ENCODE measurements at regions of chr2 and their contacts with region 1.

Region 1: GRCh38 chr2:43995733-43996533 is at the start of gene LRPPRC:
- DNase-seq: peak; percentile 87 to 89
- H3K4me3 ChIP-seq: peak within 1 kb of the TSS; percentile 84 to 100 (median 100)
- H3K27ac ChIP-seq: peak within 1 kb of the TSS; percentile 98
- H3K4me1 ChIP-seq: peaks cover 3 to 7% (median 5%) of the 10 kb centered on the region in 4 experiments; a peak in 5 of 7 replicates
- H3K27me3 ChIP-seq: no peaks in the 10 kb centered on the region
- CTCF ChIP-seq: no peak
- EP300 ChIP-seq: peak in 1 of 2 experiments; percentile 98; a peak in 2 of 3 replicates
- POLR2A ChIP-seq: peak; percentile 83 to 96
- RAD21 ChIP-seq: no peak
- total RNA-seq, gene LRPPRC: 156 and 167 TPM in 2 replicates

Region 2: DNA sequence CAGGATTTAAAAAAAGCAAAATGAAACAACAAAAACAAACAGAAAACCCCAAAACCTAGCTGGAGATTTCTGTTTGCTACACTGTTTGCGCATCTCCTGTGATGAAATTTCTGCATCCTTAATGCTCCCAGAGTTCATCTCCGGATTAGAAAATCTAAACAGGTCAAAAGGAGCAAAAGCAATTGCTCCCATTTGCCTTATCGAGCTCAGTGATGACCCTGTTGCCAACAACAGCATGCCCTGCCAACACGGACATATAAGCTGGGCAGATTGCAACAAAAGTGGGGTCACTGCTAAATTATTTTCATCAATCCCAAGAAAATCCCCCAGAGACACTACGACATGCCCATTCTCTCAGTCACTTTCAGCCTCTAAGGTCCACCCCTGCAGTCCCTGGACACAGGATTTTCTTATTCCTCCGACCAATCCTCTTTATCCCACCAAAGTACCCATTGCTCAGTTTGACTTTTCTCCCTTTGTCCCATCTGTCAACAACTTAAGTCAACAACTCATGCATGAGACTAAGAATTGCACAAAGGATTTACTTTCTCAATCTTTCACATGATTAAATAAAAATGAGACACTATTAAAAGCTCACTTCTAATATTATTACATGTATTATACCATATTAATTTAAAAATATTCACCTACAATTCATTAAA is 89.4 kb before region 1 on chr2:
- CTCF ChIA-PET with region 1: no interaction called
- POLR2A ChIA-PET with region 1: no interaction called
- DNase-seq: no peak
- H3K4me3 ChIP-seq: no peak overlapping the region
- H3K27ac ChIP-seq: no peak overlapping the region
- H3K4me1 ChIP-seq: no peaks in the 10 kb centered on the region
- H3K27me3 ChIP-seq: peaks cover 0 to 1% (median 0%) of the 10 kb centered on the region in 4 experiments; a peak in 1 of 7 replicates
- CTCF ChIP-seq: no peak
- EP300 ChIP-seq: no peak
- POLR2A ChIP-seq: no peak
- RAD21 ChIP-seq: no peak

Region 3: GRCh38 chr2:43985359-43985758 is 10.6 kb before region 1 on chr2:
- CTCF ChIA-PET with region 1: no interaction called
- POLR2A ChIA-PET with region 1: interaction called, 35 read pairs
- DNase-seq: no peak
- H3K4me3 ChIP-seq: no peak overlapping the region
- H3K27ac ChIP-seq: no peak overlapping the region; the same call in 1 of the 2 replicates
- H3K4me1 ChIP-seq: peaks cover 0 to 3% (median 0%) of the 10 kb centered on the region in 4 experiments; a peak in 1 of 7 replicates
- H3K27me3 ChIP-seq: no peaks in the 10 kb centered on the region
- CTCF ChIP-seq: no peak
- EP300 ChIP-seq: no peak
- POLR2A ChIP-seq: 0 out of 3 replicates have a peak, but pooled peaks of 1 of the 2 experiments have one; percentile 33
- RAD21 ChIP-seq: no peak

Region 4: DNA sequence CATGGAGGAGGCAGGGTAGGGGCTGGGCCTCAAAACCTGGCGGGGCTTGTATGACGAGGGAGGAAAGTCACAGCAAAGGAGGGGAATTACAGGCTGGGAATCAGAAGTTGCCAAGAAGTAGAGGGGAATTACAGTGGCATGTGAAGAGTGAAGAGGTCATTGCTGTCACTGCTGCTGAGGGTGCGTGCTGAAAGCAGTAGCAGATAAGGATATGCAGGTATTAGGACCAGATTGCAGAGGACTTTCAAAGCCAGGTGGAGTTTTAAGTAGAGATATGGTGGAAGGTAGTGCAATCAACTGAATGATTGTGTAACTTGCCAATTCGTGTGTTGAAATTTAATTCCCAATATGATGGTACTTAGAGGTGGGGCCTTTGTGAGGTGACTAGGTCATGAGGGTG is 19.3 kb after region 1 on chr2:
- CTCF ChIA-PET with region 1: interaction called, 4 read pairs
- POLR2A ChIA-PET with region 1: interaction called, 11 read pairs
- DNase-seq: no peak
- H3K4me3 ChIP-seq: no peak overlapping the region
- H3K27ac ChIP-seq: no peak overlapping the region
- H3K4me1 ChIP-seq: peaks cover 0 to 2% (median 0%) of the 10 kb centered on the region in 4 experiments; a peak in 2 of 7 replicates
- H3K27me3 ChIP-seq: no peaks in the 10 kb centered on the region
- CTCF ChIP-seq: no peak
- EP300 ChIP-seq: no peak
- POLR2A ChIP-seq: no peak
- RAD21 ChIP-seq: no peak